ENCODE measurements at regions of chr1 and their contacts with region 1.

Region 1: GRCh38 chr1:223556414-223557129 is 108.9 kb downstream of the CAPN8 start:
- DNase-seq: peak; percentile 54
- H3K4me3 Mint-ChIP-seq: no peak overlapping the region
- H3K27ac Mint-ChIP-seq: no peak overlapping the region
- H3K4me1 Mint-ChIP-seq: peaks cover 4% of the 10 kb centered on the region
- H3K27me3 Mint-ChIP-seq: no peaks in the 10 kb centered on the region

Region 2: DNA sequence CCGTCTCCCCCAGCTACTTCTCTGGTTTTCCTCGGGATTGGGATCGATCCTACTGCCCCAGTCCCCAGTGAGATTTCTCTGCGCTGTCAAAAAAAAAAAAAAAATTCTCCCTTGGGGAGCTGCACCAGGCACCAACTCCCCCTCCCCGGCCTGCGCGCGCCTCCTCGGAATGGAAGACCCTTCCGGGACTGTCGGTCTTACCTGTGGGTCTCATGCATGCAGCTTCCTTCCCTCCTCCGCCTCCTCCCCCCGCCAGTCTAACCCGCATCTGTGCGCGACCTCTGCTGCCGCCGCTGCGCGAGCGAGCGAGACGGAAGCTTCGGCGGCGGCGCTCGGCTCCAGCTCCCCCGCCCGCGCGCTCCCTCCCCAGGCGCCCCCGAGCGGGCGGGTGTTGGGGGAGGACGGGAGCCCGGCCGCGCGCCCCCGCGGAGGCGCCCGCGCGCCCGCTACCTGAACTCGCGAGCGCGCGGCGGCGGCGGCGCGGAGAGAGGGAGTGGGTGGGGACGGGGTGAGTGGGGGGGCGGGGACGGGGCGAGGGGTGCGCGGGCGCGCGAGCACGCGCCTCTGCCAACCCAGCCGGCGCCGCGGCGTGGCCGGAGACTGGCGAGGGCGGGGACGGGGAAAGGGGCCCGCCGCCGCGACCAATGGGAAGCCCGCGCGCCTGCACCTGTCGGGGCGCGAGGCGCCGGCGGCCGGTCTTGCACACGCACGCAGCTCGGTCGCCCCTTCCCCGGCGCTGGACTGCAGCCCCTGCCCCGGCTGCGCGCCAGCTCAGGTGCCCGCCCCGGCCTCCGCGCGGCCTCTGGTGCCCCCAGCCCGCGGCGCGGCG is 192.5 kb before region 1 on chr1 and contains the start of gene SUSD4:
- CTCF ChIA-PET with region 1: no interaction called
- POLR2A ChIA-PET with region 1: no interaction called
- DNase-seq: peak; percentile 54
- H3K4me3 Mint-ChIP-seq: peak within 1 kb of the TSS; percentile 71
- H3K27ac Mint-ChIP-seq: no peak within 1 kb of the TSS
- H3K4me1 Mint-ChIP-seq: peaks cover 13% of the 10 kb centered on the region
- H3K27me3 Mint-ChIP-seq: peaks cover 55% of the 10 kb centered on the region
- total RNA-seq, gene SUSD4: 0.23 to 0.28 TPM

Region 3: GRCh38 chr1:223500560-223501425 is 55.8 kb before region 1 on chr1:
- CTCF ChIA-PET with region 1: no interaction called
- POLR2A ChIA-PET with region 1: no interaction called
- DNase-seq: no peak
- H3K4me3 Mint-ChIP-seq: no peak overlapping the region
- H3K27ac Mint-ChIP-seq: no peak overlapping the region
- H3K4me1 Mint-ChIP-seq: peaks cover 1% of the 10 kb centered on the region
- H3K27me3 Mint-ChIP-seq: peaks cover 1% of the 10 kb centered on the region

Region 4: GRCh38 chr1:223611936-223612335 is 55.4 kb after region 1 on chr1:
- CTCF ChIA-PET with region 1: interaction called, 24 read pairs
- POLR2A ChIA-PET with region 1: no interaction called
- DNase-seq: no peak
- H3K4me3 Mint-ChIP-seq: no peak overlapping the region
- H3K27ac Mint-ChIP-seq: no peak overlapping the region
- H3K4me1 Mint-ChIP-seq: no peaks in the 10 kb centered on the region
- H3K27me3 Mint-ChIP-seq: no peaks in the 10 kb centered on the region

Region 5: GRCh38 chr1:223628233-223629125 is 71.9 kb after region 1 on chr1:
- CTCF ChIA-PET with region 1: interaction called, 10 read pairs
- POLR2A ChIA-PET with region 1: no interaction called
- DNase-seq: peak; percentile 44
- H3K4me3 Mint-ChIP-seq: no peak overlapping the region
- H3K27ac Mint-ChIP-seq: no peak overlapping the region
- H3K4me1 Mint-ChIP-seq: no peaks in the 10 kb centered on the region
- H3K27me3 Mint-ChIP-seq: peaks cover 7% of the 10 kb centered on the region

Region 6: GRCh38 chr1:223695941-223696340 is 139.4 kb after region 1 on chr1:
- CTCF ChIA-PET with region 1: interaction called, 12 read pairs
- POLR2A ChIA-PET with region 1: no interaction called
- DNase-seq: no peak
- H3K4me3 Mint-ChIP-seq: no peak overlapping the region
- H3K27ac Mint-ChIP-seq: no peak overlapping the region
- H3K4me1 Mint-ChIP-seq: peaks cover 15% of the 10 kb centered on the region
- H3K27me3 Mint-ChIP-seq: peaks cover 2% of the 10 kb centered on the region